ENCODE measurements at regions of chr16 and their contacts with region 1.

Region 1: DNA sequence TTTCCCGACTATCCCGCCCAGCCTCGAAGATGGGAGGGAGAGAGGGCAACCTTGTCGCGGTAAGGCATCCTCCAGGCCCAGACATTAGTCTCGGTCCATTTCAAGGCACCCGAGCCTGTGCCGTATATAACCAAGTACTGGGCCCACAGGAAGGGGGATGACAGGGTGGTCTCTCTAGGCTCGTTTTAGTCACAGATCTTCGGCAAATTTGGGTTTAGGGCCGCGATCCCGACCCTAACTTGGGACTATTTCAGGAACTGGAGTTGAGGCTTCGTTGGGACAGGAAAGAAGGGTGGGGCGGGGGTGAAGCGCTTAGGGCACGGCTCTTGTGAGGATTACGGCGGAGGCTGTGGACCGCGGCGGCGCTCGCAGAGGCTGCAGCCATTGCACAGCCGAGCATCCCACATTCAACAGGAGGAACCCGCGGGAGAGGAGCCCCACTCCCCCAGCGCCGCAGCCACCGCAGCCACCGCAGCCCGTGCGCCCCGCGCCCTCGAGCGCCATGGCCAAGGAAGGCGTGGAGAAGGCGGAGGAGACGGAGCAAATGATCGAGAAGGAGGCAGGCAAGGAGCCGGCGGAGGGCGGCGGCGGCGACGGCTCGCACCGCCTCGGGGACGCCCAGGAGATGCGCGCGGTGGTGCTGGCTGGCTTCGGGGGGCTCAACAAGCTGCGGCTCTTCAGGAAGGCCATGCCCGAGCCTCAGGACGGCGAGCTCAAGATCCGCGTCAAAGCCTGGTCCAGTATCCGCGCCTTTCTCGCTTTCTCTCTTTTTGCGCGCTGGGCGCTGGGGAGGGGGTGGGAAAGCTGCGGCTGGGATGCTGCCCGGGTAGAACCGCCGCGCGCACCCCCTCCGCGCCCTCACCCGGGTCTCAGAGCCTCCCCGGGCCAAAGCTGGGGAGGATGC is at the start of gene VAT1L:
- DNase-seq: peak; percentile 26 to 69
- H3K4me3 ChIP-seq: peak within 1 kb of the TSS; percentile 63 to 83
- H3K27ac ChIP-seq: peak within 1 kb of the TSS in 1 of 2 donors; percentile 12
- H3K4me1 ChIP-seq: peaks cover 0 to 21% (median 13%) of the 10 kb centered on the region in 4 donors
- H3K27me3 ChIP-seq: peaks cover 0 to 26% of the 10 kb centered on the region in 2 donors
- CTCF ChIP-seq: no peak

Region 2: DNA sequence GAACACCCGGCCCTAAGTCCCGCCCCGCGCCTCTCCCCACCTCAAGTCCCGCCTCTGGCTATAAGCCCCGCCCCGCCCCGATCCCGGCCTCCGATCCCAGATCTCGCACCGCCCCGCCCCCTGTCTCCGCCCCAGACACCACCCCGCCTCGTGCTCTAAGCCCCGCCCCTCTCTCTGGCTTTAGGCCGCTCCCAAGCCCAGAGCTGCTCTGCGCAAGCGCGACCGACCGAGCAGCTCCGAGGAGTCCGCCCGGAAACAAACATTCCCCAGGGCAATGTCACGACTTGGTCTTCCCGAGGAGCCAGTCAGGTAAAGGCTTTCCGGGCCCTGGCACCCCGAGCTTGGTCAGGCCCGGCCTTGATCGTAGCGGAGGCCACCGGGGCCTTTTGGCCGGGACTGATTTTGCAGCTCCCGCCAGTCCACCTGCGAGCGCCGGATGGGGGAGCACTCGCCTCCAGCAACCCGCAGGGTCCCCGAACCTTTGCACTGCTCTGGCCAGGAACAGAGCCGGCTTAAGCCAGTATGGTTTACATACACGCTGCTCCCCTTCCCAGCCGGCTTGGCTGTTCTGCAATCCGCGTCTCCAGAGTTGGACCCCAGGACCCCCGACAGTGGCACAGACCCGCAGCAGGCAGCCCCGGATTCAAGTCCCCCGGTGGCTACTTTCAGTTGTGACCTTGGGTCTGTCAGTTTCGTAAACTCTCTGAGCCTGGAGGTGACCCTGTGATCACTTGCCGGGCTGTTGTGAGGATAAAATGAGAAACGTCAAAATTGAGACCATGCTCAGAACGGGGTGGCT is 65.9 kb before region 1 on chr16 and contains the start of gene NUDT7:
- intact Hi-C with region 1: loop called (anchors 10 kb)
- DNase-seq: peak; percentile 99
- H3K4me3 ChIP-seq: peak within 1 kb of the TSS; percentile 75 to 80
- H3K27ac ChIP-seq: peak within 1 kb of the TSS; percentile 86 to 94
- H3K4me1 ChIP-seq: peaks cover 0 to 13% (median 9%) of the 10 kb centered on the region in 4 donors
- H3K27me3 ChIP-seq: no peaks in the 10 kb centered on the region
- CTCF ChIP-seq: no peak

Region 3: DNA sequence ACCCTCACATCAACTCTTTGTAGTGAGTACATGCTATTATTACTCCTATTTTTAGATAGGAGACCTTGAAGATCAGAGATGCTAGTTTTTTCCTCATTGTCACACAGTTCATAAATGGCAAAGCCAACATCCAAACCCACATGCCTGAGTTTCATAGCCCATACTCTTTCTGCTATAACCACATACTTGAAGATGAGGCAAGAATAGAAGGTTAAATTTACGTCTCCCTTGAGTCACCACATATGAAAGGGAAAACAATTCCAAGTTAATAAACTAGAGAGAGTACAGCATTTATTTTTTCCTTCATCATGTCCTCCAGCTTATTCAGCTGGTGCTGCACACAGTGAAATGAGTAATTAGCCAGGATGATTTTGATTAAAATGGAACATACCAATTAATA is 42.5 kb before region 1 on chr16:
- intact Hi-C with region 1: no loop called
- DNase-seq: no peak
- H3K4me3 ChIP-seq: no peak overlapping the region
- H3K27ac ChIP-seq: no peak overlapping the region
- H3K4me1 ChIP-seq: no peaks in the 10 kb centered on the region
- H3K27me3 ChIP-seq: no peaks in the 10 kb centered on the region
- CTCF ChIP-seq: no peak